Activated T-helper 1 cell treated with anti-CD3 and anti-CD28 coated beads, Interleukin-12 subunit alpha, Interleukin-12 subunit beta, Interleukin-2, Interleukin-4 antibody, amounts not matched to agents 30 ng/mL and 10 ng/mL and 1 ng/mL, durations not matched to agents 14 hours and 24 hours and 36 hours (primary cell): ENCODE measurements at regions of chr16 and their contacts with region 1.

Region 1: GRCh38 chr16:19717771-19718602 is at the starts of genes IQCK and KNOP1:
- DNase-seq: peak; percentile 87
- H3K4me3 Mint-ChIP-seq: peak within 1 kb of the TSS; percentile 95
- H3K27ac Mint-ChIP-seq: peak within 1 kb of the TSS; percentile 88
- H3K4me1 Mint-ChIP-seq: peaks cover 28% of the 10 kb centered on the region
- H3K27me3 Mint-ChIP-seq: no peaks in the 10 kb centered on the region
- total RNA-seq, gene IQCK: 1.1 and 2.0 TPM in 2 replicates
- total RNA-seq, gene KNOP1: 35.3 and 36.0 TPM in 2 replicates

Region 2: GRCh38 chr16:19555162-19555937 is 162.6 kb before region 1 on chr16 and contains the start of gene VPS35L:
- intact Hi-C with region 1: loop called (anchors 1 kb)
- DNase-seq: peak; percentile 93
- H3K4me3 Mint-ChIP-seq: peak within 1 kb of the TSS; percentile 93
- H3K27ac Mint-ChIP-seq: peak within 1 kb of the TSS; percentile 93
- H3K4me1 Mint-ChIP-seq: peaks cover 14% of the 10 kb centered on the region
- H3K27me3 Mint-ChIP-seq: no peaks in the 10 kb centered on the region
- total RNA-seq, gene VPS35L: 36.2 and 37.4 TPM in 2 replicates

Region 3: DNA sequence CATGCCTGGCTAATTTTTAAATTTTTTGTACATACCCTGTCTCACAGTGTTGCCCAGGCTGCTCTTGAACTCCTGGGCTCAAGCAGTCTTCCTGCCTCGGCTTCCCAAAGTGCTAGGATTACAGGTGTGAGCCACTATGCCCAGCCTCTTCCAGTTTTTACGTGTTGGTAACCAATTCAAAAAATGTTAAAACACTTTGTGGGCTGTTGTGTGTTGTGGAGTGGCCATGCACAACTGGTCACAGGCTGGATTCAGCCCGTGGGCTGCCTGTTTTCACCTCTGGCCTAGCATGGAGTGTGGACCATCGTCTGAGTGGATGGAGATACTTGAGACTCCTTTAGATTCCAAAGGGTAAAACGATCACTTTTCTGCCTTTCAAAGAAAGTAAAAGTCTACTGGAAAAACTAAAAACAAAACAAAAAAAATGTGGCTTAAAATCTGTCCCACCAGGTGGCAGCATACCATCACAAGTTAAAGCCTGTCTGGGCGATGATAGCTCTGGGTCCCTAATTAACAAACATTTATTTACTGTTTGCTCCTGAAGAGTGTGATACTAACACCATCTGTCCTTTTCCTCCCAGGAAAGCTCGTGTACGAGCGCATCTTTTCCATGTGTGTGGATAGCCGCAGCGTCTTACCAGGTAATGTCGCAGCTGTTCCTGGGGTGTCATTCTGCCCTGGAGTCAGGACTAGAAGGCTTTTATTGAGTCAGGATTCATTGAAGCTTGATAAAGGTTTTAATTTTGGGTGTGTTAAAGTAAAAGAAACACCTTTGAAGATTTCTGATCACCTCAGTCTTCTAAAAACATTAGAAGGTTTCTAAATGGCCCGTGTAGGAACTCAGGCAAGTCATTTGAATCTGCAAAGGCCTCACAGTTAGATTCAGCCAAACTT is 116.7 kb before region 1 on chr16:
- intact Hi-C with region 1: loop called (anchors 5 kb)
- DNase-seq: no peak
- H3K4me3 Mint-ChIP-seq: no peak overlapping the region
- H3K27ac Mint-ChIP-seq: no peak overlapping the region
- H3K4me1 Mint-ChIP-seq: no peaks in the 10 kb centered on the region
- H3K27me3 Mint-ChIP-seq: no peaks in the 10 kb centered on the region

Region 4: DNA sequence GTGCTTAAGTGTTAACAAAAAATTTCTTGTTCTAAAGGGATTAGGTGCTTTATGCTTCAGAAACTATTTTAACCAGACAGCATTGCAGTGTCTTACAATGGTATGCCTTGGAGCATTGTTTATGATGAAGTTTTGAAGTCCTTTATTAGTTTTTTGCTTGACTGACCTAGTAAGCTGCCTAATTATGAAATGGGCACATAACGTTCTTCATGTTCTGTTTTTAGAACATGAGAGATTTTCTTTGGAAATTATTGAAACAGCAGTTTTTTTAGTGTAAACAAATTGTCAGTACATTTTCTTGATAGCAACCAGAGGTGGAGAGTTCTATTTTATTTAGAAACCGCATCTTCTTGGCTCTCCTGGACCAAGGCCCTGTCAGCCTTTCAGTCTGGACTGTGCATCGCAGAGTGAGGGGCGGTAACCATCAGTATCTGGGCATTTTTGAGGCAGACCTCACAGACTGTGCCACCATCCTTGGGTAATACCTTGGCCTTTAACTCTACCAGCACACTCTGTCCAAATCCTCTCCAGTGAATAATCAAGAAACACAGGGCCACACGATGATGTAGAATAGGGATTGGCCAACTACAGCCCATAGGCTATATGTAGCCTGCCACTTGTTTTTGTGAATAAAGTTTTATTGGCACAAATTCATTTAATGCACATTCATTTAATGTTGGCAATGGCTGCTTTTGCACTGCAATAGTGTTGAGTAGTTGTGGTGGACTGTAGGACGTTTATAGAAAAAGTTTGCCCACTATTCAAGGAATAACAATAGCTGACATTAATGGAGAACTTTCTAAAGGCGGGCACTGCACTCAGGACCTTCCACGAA is 81.3 kb before region 1 on chr16:
- intact Hi-C with region 1: no loop called
- DNase-seq: no peak
- H3K4me3 Mint-ChIP-seq: no peak overlapping the region
- H3K27ac Mint-ChIP-seq: no peak overlapping the region
- H3K4me1 Mint-ChIP-seq: peaks cover 9% of the 10 kb centered on the region
- H3K27me3 Mint-ChIP-seq: no peaks in the 10 kb centered on the region

Region 5: GRCh38 chr16:19860166-19861041 is 142.4 kb after region 1 on chr16:
- intact Hi-C with region 1: no loop called
- DNase-seq: no peak
- H3K4me3 Mint-ChIP-seq: no peak overlapping the region
- H3K27ac Mint-ChIP-seq: no peak overlapping the region
- H3K4me1 Mint-ChIP-seq: no peaks in the 10 kb centered on the region
- H3K27me3 Mint-ChIP-seq: no peaks in the 10 kb centered on the region

Region 6: GRCh38 chr16:21599233-21600030 is 1881.4 kb after region 1 on chr16 and contains the start of gene METTL9:
- intact Hi-C with region 1: loop called (anchors 5 kb)
- DNase-seq: peak; percentile 95
- H3K4me3 Mint-ChIP-seq: peak within 1 kb of the TSS; percentile 96
- H3K27ac Mint-ChIP-seq: peak within 1 kb of the TSS; percentile 87
- H3K4me1 Mint-ChIP-seq: peaks cover 55% of the 10 kb centered on the region
- H3K27me3 Mint-ChIP-seq: peaks cover 3% of the 10 kb centered on the region
- total RNA-seq, gene METTL9: 58.8 and 64.9 TPM in 2 replicates